Right ventricle myocardium inferior (tissue), 1 donor: ENCODE measurements at regions of chr19 and their contacts with region 1.

Region 1: DNA sequence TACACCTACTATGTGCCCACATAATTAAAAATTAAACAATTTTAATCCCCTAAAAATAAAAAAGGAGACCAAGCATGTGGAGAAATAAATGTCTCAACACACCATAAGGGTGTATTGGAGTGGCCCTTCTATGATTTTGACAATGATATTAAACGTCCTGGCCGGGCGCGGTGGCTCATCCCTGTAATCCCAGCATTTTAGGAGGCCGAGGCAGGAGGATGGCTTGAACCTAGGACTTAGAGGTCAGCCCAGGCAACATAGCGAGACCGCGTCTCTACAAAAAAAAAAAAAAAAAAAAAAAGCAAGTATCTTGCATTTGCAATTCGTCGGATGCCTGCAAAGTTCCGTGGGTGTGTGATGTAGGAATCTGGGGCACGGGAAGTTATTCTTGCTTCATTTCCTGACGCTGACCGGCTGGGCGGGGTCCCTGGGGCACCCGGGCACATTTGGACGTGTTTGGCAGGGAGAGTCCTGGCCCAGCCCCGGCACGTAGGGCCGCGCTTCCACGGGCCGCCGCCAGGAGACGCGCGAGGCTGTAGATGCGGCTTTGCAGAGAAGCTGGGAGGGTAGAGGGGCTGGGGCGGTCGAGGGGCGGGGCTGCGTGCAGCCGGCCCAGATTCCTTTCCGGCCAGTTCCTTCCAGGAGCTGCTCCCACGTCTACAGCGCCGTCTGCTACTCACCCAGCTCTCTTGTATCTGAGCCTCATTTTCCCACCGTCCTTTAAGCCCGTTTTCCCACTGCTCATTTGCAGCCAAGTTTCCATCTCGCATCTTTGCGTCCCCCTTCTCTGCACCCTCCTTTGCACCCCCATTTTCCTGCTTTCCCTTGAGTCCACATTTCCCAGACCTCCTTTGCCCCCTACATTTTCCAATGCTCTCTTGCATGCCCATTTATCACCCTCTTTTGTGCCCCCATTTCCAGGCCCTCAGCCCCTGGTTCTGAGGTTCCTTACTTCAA is 2.2 kb upstream of the TSPAN16 start:
- DNase-seq: peak; percentile 98
- ATAC-seq: peak; percentile 96

Region 2: GRCh38 chr19:11137542-11138384 is 155.9 kb before region 1 on chr19:
- intact Hi-C with region 1: loop called (anchors 5 kb)
- DNase-seq: peak; percentile 85
- ATAC-seq: peak; percentile 57

Region 3: GRCh38 chr19:11346092-11346940 is 52.6 kb after region 1 on chr19 and contains the starts of genes CCDC159 and TMEM205:
- intact Hi-C with region 1: loop called (anchors 2 kb)
- DNase-seq: peak; percentile 98
- ATAC-seq: peak; percentile 95
- total RNA-seq, gene CCDC159: 17.1 TPM
- total RNA-seq, gene TMEM205: 106 TPM

Region 4: DNA sequence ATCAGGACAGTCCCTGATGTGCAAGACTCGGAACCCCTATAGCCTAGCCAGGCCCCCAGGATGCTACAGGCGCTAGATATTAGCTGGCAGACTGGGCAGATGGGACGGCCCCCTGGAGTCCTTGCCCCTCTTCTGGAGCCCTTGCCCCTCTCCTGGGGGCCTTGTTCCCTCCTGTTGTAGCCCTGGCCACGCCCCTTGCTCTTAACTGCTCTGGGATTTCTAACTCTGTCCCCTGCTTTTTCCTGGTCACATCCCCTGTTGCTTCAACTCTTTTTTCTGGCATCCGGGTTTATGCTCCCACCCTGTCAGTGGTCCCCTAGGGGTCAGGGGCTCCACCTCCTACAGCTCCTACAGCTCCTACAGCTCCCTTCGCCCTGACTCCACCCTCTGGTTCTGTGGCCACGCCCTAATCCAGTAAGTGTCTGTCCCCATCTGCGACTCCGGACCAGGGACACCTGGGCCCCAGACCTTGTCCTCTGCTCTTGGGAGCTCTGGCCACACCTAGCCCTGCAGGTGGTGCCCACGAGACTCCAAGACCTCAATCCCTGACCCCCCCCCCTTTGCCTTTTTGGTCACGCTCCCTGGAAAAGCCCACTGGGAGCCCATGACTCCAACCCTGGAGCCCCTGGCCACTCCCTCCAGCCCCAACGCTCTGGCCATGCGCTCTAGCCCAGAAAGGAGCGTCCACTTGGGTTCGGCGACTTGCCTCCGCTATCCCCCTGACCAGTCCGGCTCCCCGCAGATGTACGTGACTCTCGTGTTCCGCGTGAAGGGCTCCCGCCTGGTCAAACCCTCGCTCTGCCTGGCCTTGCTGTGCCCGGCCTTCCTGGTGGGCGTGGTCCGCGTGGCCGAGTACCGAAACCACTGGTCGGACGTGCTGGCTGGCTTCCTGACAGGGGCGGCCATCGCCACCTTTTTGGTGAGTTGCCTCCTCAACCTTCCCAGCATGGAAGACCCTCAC is 68.3 kb after region 1 on chr19:
- intact Hi-C with region 1: no loop called
- DNase-seq: no peak
- ATAC-seq: no peak

Region 5: GRCh38 chr19:11380653-11381534 is 87.2 kb after region 1 on chr19:
- intact Hi-C with region 1: loop called (anchors 5 kb)
- DNase-seq: peak; percentile 95
- ATAC-seq: peak; percentile 88

Region 6: DNA sequence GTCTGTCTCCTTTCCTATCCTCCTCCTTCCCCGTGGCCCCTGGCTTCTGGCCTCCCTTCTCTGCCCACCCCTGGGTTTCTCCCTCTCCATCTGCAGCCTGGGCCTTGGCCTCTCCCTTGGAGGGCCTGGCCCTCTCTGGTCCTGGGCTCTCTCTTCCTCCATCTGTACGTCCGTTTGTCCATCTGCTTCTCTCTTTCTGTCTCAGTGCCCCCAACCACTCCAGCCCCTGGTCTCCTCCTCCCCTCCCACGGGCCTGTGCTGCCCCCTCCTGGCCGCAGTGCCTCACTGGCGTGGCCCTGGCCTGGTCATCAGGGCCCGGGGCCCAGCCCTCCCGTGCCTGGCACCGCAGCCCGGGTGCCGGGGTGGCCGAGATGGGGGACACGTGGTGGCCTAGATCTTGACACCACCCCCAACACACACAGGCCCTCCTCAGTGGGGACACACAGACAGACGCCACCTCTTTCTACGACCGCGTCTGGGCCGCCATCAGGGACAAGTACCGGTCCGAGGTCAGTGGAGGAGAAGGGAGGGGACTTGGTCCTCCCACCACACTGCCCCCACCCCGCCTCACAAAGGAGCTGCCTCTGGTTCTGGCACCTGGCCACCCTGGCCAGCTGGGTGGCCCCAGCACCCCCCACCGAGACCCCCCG is 153.1 kb after region 1 on chr19:
- intact Hi-C with region 1: loop called (anchors 10 kb)
- DNase-seq: peak; percentile 86
- ATAC-seq: peak; percentile 68

Region 7: DNA sequence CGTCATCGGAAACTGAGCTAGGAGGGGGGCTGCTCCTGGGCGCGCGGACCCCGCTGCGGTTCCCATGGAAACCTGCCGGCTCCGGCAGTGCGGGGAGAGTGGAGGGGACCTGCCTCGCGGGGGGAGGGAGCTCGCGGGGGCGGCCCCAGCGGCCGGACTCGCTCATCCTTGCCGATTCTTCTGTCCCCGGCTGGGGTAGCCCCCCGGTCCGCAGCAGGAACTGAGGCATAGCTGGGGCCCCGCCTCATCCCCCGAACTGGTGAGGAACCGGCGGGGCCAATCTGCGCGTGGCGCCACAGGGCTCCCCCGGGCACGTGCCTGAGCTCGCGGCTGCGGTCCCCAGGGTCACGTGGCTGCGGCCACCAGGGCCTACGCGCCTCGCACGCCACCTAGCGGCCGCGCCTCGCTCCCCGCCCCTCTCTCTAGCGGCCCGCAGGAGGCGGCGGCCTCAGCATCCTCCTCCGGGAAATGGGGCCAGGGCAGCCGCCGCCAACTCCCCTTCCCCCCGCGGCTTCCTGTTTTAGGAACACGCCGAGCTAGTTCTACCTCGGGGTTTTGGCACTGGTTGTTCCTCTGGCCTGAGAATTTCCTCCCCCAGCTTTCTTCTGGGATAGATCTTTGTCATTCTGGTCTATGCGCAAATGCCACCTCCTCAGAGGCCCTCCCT is 188.8 kb after region 1 on chr19:
- intact Hi-C with region 1: loop called (anchors 2 kb)
- DNase-seq: peak; percentile 94
- ATAC-seq: peak; percentile 88

Region 8: GRCh38 chr19:11587302-11587974 is 293.7 kb after region 1 on chr19:
- intact Hi-C with region 1: loop called (anchors 5 kb)
- DNase-seq: peak; percentile 85
- ATAC-seq: peak; percentile 89